ENCODE measurements at regions of chr7 and their contacts with region 1.

Region 1: DNA sequence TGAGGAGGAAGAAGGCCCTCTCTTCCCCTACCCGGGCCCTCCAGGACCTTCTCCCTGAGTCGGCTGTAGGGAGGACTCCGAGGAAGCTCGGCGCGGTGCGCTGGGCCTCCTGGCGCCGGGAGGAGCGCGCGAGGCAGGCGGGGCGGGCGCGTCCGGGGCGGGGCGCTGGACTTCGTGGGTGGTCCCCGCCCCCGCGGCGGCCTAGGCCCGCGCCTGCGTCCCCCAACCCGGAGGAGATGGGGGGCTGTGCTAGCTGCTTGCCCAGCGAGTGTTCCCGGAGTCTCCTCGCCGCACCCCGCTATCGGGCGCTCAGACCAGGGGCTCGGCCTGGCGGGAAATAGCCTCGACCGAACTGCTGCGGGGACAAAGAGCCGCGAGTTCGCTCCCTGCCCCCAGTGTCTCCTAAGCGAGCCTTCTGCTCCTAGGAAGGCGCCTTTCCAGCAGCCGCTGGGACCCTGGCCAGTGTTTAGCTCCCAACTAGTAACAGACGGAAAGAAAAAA is 19.2 kb upstream of the SMO start:
- DNase-seq: peak; percentile 18
- H3K4me3 ChIP-seq: peak overlapping the region; percentile 30 to 63 (median 35)
- H3K27ac ChIP-seq: no peak overlapping the region
- H3K4me1 ChIP-seq: peaks cover 6% of the 10 kb centered on the region
- H3K27me3 ChIP-seq: peaks cover 12 to 14% of the 10 kb centered on the region in 2 experiments
- CTCF ChIP-seq: no peak
- POLR2A ChIP-seq: no peak

Region 2: DNA sequence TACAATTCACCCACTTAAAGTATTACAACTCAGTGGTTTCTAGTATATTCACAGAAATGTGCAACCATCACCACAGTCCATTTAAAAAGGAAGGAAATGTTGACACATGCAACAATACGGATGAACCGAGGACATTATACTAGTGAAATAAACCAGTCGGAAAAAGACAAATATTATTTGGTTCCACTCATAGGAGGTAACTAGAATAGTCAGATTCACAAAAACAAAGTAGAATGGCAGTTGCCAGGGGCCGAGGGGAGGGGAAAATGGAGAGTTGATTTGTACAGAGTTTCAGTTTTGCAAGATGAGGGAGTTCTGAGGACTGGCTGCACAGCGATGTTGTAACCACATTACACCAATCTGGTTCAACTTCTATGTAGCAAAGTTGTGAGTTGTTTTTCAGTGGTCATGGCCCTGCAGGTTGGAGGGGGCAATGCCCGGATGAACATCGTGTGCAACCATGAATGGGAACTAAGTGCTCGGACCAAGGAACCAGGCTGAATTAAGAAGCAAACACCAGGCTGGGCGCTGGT is 96.7 kb before region 1 on chr7:
- CTCF ChIA-PET with region 1: no interaction called
- POLR2A ChIA-PET with region 1: no interaction called
- dilution Hi-C with region 1: no loop called
- intact Hi-C with region 1: no loop called
- DNase-seq: no peak
- H3K4me3 ChIP-seq: no peak overlapping the region
- H3K27ac ChIP-seq: no peak overlapping the region
- H3K4me1 ChIP-seq: no peaks in the 10 kb centered on the region
- H3K27me3 ChIP-seq: peaks cover 13 to 16% of the 10 kb centered on the region in 2 experiments
- CTCF ChIP-seq: no peak
- POLR2A ChIP-seq: no peak

Region 3: GRCh38 chr7:129210256-129210988 is 41.2 kb after region 1 on chr7:
- CTCF ChIA-PET with region 1: interaction called, 465 read pairs
- POLR2A ChIA-PET with region 1: interaction called, 7 read pairs
- dilution Hi-C with region 1: no loop called
- intact Hi-C with region 1: loop called (anchors 1 kb)
- DNase-seq: peak; percentile 65
- H3K4me3 ChIP-seq: no peak overlapping the region
- H3K27ac ChIP-seq: no peak overlapping the region
- H3K4me1 ChIP-seq: no peaks in the 10 kb centered on the region
- H3K27me3 ChIP-seq: no peaks in the 10 kb centered on the region
- CTCF ChIP-seq: peak; percentile 78 to 93
- POLR2A ChIP-seq: no peak

Measured in endothelial cell of umbilical vein (primary cell).